Cardiac septum (tissue), 1 donor: ENCODE measurements at regions of chr4 and their contacts with region 1.

Region 1: DNA sequence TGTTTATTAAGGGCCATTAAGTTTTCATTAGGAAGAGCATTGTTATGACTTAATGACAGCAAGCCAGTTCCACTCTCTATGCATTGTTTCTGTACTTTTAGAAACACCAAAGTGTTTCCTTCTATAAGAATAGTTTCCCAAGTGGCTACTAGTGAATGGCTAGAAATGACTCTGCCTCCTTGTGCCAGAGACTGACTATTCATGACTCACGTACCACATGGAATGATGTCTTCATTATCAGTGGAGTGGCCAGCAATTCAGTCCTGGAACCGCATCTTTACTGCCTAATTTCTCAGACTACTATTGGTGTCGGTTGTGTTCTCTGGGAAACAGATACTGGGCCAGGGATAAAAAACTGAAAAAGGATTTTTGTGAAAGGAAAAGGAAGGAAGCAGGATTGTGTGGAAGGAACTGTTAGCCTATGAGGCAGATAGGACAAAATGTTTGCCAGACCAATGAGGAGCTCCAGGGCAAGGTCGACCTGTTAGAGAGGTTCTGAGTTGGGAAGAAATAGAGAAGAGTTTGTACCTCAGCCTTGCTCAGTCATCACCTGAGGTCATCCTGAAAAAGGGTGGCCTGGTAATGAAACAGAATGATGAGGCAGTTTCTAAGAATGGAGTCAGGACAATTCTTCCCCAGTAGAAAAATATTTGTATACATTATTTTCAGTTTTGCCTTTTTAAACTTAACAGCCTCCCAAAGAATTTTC is 218.6 kb downstream of the SPCS3 start:
- DNase-seq: no peak

Region 2: GRCh38 chr4:176383273-176384077 is 154.9 kb before region 1 on chr4:
- intact Hi-C with region 1: loop called (anchors 2 kb)
- DNase-seq: no peak